Posterior cingulate gyrus (tissue), 11 donors: ENCODE measurements at regions of chr20 and their contacts with region 1.

Region 1: DNA sequence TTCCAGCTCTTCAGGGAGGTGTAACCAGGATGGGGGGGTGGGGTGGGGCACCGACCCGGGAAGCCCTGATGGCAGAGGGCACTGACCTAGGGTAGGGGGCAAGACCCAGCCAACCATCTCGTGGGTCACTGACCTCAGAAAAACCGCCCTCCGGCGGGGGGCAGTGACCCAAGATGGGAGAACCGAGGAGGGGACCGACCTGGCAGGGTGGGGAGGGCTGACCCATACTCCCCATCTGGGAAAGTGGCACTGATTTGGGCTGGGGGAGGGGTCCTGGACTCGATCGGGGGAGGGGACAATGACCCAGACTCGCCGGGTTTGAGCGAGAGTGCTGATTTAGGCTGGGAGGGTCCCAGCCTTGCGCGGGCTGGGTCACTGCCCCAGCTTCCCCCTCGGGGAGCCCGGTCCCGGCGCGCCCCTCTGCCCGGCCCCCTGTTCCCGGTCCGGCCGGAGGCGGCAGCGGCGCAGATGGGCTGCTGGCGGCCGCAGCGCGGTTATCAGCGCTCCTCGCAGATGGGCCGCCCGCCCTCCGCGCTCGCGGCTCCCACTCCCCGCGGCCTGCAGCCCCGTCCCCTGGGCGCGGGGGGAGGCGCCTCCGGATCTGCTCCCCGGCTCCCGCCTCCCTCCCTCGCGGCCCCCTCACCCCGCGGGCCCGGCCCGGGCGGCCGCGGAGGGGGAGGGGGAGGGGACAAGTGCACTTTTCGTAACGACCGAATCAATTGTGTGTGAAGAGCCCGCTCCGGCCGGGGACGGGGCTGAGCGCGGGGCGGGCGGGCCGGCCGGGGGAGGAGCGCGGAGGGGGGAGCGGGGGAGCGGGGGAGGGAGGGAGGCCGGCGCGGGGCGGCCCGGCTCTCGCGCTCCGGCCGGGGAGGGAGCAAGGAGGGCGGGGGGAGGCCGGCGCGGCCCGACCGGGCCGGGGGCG is 2.2 kb downstream of the NOL4L start:
- DNase-seq: peak in 2 of 10 donors; percentile 66 to 87

Region 2: GRCh38 chr20:32521780-32522525 is 61.0 kb before region 1 on chr20:
- intact Hi-C with region 1: loop called (anchors 5 kb)
- DNase-seq: peak; percentile 63 to 97 (median 80)

Region 3: GRCh38 chr20:32535953-32536823 is 46.7 kb before region 1 on chr20:
- intact Hi-C with region 1: loop called (anchors 2 kb)
- DNase-seq: peak in 7 of 10 donors; percentile 54 to 94 (median 78)